Left colon (tissue), 2 donors: ENCODE measurements at regions of chr22 and their contacts with region 1.

Region 1: DNA sequence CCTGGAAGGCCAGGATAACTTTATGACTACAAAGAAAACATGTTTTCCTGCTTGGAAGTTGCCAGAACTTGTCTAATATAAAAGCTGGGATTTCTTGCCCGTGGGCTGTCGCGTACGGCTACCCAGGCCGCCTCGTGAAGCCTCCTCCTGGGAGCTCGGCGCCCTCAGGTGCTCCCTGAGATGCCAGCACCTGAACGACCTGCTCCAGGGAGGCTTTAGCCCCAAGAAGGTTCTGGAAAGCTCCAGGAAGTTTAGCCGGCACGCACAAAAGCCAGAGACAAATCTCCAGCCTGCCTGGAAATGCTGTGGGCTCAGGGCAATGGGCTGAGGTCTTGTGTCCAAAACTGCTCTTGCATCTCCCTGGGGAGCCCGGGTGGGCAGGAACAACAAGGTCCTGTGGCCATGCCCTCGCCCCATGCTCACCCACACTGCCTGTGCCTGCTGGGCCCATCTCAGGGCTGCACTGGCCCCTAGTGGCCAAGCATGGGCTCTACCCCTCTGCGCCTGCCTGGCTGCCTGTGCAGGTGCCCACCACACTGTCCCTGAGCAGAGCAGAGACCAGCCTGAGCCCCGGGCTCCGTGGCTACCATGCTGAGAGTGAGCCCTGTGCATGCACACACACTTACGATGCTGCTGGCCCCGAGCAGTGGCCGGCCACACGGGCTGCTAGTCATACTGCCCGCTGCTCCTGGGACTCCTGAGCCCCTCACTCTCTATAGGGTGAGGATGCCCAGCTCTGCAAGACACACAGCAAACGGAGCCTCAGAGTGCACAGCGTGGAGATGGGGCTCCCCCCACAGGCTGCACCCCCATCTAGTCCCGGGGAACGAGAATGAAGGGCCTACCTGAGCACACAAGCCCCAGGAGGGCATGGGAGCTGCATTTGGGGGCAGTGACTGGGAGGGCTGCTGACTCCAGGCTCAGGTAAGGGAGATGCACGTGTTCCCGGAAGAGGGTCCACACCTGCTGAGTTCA is 4.9 kb upstream of the CELSR1 start:
- DNase-seq: peak in 1 of 2 donors; percentile 75
- ATAC-seq: peak; percentile 94

Region 2: DNA sequence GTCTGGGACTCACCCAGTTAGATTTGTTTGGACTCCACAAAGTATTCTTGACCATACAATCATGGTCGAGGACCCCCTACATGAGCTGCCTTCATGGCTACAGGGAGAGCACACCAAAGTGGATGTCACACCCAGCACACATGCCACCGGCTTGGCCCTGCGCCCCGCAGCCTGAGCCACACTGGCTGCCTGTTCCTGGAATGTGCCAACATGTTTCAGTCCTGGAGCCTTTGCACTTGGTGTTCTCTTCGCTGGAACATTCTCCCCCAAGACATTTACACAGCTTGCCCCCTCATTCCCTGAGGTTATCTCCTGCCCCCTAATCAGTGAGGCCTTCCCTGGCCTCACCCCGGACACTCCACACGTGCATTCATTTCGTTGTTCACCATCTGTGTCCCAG is 346.0 kb before region 1 on chr22:
- intact Hi-C with region 1: no loop called
- DNase-seq: peak; percentile 63 to 64
- ATAC-seq: peak; percentile 46

Region 3: GRCh38 chr22:46367707-46368191 is 174.5 kb before region 1 on chr22:
- intact Hi-C with region 1: loop called (anchors 5 to 10 kb)
- DNase-seq: peak; percentile 57 to 89
- ATAC-seq: peak; percentile 72

Region 4: DNA sequence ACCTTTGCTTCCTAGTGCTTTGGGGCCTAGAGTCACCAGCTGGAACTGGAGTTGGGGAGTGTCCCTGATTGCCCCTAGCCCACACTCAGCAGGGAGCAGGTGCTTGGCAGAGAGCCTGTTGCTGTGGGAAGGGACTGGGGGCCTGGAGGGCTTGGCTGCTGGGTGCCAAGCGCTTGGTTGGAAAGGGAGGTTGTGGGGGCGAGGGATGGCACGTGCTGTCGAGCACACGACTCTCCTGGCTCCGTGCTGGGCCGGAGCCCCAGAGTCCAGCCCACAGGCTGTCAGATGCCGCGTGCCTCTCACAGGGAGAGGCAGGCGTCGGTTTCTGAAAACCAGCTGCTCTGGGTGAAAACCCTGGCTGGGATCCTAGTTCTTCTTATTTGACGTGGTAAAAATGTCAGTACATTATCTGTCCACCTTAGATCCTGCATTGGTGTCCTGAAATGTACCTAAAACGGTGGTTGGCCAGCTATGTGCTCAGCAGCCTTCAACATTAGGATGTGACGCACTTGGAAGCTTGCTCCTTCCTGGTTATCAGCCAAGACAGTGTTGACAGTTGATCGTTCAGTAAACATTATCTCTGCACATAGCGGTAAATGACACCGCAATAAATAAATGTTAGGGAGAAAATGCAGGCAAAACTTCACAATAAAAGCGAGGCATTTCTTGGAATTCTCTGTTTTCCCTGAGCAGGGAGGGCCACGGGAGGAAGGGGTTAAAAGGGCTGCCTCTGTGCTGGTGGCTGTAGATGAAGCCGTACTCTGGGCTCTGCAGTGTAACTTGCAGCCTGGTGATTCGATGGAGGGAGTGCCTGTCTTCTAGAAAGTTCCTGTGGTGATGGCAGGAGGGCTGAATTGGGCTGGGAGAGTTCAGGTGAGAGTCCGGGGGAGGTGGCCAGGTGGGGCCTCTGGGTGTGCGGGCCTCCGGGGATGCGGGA is 107.1 kb after region 1 on chr22:
- intact Hi-C with region 1: no loop called
- DNase-seq: no peak
- ATAC-seq: no peak